ENCODE measurements at regions of chr10 and their contacts with region 1.

Region 1: GRCh38 chr10:69392481-69393000 is 24.2 kb downstream of the TACR2 start:
- DNase-seq: peak; percentile 83
- H3K4me3 ChIP-seq: no peak overlapping the region
- H3K27ac ChIP-seq: no peak overlapping the region
- H3K4me1 ChIP-seq: peaks cover 8% of the 10 kb centered on the region
- CTCF ChIP-seq: peak; percentile 95

Region 2: GRCh38 chr10:69014171-69014570 is 378.4 kb before region 1 on chr10:
- CTCF ChIA-PET with region 1: no interaction called
- POLR2A ChIA-PET with region 1: no interaction called
- intact Hi-C with region 1: loop called (anchors 10 kb)
- DNase-seq: no peak
- H3K4me3 ChIP-seq: no peak overlapping the region
- H3K27ac ChIP-seq: no peak overlapping the region
- H3K4me1 ChIP-seq: no peaks in the 10 kb centered on the region
- CTCF ChIP-seq: no peak

Region 3: GRCh38 chr10:69222157-69223027 is 170.1 kb before region 1 on chr10:
- CTCF ChIA-PET with region 1: no interaction called
- POLR2A ChIA-PET with region 1: no interaction called
- intact Hi-C with region 1: loop called (anchors 5 kb)
- DNase-seq: peak; percentile 96
- H3K4me3 ChIP-seq: peak overlapping the region; percentile 45
- H3K27ac ChIP-seq: peak overlapping the region; percentile 74
- H3K4me1 ChIP-seq: peaks cover 36% of the 10 kb centered on the region
- CTCF ChIP-seq: peak; percentile 96

Region 4: GRCh38 chr10:69237528-69238159 is 154.9 kb before region 1 on chr10:
- CTCF ChIA-PET with region 1: interaction called, 3 read pairs
- POLR2A ChIA-PET with region 1: interaction called, 3 read pairs
- intact Hi-C with region 1: loop called (anchors 1 kb)
- DNase-seq: peak; percentile 76
- H3K4me3 ChIP-seq: no peak overlapping the region
- H3K27ac ChIP-seq: no peak overlapping the region
- H3K4me1 ChIP-seq: no peaks in the 10 kb centered on the region
- CTCF ChIP-seq: peak; percentile 96

Region 5: DNA sequence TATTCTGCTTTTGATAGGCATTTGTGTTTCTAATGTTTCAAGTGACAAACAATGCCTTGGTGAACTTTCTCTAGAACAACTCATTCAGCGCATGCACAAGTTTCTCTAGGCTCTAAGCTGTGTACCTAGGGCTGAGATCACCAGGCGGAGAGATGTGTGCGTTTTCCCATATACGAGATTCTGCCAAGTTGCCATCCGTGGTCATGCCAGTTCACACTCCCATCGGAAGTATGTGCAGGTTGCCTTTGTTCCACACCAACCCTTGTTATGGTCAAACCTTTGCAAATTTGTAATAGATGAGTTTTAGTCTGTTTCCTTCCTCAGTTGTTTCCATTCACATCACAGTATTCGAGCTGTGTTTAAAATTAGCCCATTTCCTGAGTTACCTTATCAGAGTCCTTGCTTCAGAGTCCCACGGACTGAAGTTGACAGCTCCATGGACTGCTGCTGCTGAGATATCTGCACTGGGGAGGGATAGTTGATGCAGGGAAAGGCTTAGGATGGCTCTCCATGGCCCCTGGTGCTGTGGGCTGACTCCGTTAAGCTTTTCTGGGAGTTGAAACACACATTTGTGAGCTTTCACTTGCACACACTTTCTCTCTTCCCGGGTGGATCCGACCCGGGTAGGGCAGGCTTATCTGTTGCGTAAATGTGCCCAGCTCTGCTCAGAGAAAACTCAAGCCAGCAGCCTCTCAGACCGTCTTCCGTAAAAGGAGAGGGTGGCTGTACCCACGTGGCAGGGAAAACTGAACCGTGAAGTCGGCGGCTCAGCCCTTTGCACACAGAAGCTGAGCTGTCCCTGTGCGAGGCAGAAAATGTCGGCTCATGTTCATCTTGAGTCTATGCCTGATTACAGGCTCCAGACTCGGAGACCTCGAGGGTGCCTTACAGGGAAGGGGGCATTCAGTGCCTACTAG is 64.8 kb before region 1 on chr10:
- CTCF ChIA-PET with region 1: interaction called, 11 read pairs
- POLR2A ChIA-PET with region 1: no interaction called
- intact Hi-C with region 1: no loop called
- DNase-seq: no peak
- H3K4me3 ChIP-seq: no peak overlapping the region
- H3K27ac ChIP-seq: no peak overlapping the region
- H3K4me1 ChIP-seq: peaks cover 9% of the 10 kb centered on the region
- CTCF ChIP-seq: no peak

Region 6: GRCh38 chr10:69541463-69541862 is 148.9 kb after region 1 on chr10:
- CTCF ChIA-PET with region 1: no interaction called
- POLR2A ChIA-PET with region 1: no interaction called
- intact Hi-C with region 1: no loop called
- DNase-seq: no peak
- H3K4me3 ChIP-seq: no peak overlapping the region
- H3K27ac ChIP-seq: no peak overlapping the region
- H3K4me1 ChIP-seq: no peaks in the 10 kb centered on the region
- CTCF ChIP-seq: no peak

Measured in OCI-LY7 (cell line).